Gastrocnemius medialis (tissue), 4 donors: ENCODE measurements at regions of chr9 and their contacts with region 1.

Region 1: DNA sequence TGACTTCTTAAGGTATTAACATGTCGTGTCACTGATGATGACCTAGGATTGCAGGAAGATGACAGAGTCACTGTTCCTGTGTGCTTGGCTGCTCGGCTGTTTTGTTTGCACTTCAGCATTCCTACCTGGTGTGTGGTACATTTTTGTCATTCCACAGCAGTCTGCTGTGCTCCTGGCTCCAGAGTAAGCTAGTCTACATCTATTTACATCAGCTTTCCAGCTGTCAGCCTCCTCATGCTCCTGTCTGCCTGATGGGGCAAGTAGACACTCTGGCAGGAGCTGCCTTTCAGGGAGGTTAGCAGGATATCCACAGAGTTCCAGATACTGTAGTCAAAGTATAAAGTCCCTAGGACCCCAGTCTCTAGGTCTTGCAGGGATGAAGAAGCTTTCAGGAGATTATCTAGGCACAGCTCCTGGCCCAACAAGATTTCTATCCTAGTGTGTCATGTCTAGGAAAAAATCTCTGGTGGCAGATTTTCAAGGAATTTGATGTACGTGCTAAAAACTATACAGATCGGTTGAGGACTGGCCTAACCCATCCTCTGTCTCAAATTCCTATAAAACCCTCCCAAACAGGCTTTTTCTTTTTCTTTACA is 28.4 kb downstream of the RUSC2 start:
- DNase-seq: peak; percentile 28 to 69
- ATAC-seq: peak; percentile 12 to 26
- H3K4me3 ChIP-seq: no peak overlapping the region
- H3K27ac ChIP-seq: peak overlapping the region; percentile 86 to 95 (median 89)
- H3K4me1 ChIP-seq: peaks cover 94 to 96% of the 10 kb centered on the region in 2 donors
- H3K27me3 ChIP-seq: no peaks in the 10 kb centered on the region
- CTCF ChIP-seq: no peak
- POLR2A ChIP-seq: peak; percentile 4 to 39

Region 2: GRCh38 chr9:35489313-35490154 is 28.8 kb before region 1 on chr9 and contains the start of gene RUSC2:
- in situ Hi-C with region 1: no loop called
- intact Hi-C with region 1: loop called (anchors 1 kb)
- DNase-seq: peak; percentile 72 to 88
- ATAC-seq: peak; percentile 56 to 71
- H3K4me3 ChIP-seq: peak within 1 kb of the TSS; percentile 79 to 89 (median 88)
- H3K27ac ChIP-seq: peak within 1 kb of the TSS; percentile 91 to 97 (median 96)
- H3K4me1 ChIP-seq: peaks cover 31% of the 10 kb centered on the region in 2 donors
- H3K27me3 ChIP-seq: no peaks in the 10 kb centered on the region
- CTCF ChIP-seq: peak; percentile 52 to 83 (median 61)
- POLR2A ChIP-seq: peak; percentile 86 to 88
- total RNA-seq, gene RUSC2: 20.8 to 166 (median 45.7) TPM

Region 3: DNA sequence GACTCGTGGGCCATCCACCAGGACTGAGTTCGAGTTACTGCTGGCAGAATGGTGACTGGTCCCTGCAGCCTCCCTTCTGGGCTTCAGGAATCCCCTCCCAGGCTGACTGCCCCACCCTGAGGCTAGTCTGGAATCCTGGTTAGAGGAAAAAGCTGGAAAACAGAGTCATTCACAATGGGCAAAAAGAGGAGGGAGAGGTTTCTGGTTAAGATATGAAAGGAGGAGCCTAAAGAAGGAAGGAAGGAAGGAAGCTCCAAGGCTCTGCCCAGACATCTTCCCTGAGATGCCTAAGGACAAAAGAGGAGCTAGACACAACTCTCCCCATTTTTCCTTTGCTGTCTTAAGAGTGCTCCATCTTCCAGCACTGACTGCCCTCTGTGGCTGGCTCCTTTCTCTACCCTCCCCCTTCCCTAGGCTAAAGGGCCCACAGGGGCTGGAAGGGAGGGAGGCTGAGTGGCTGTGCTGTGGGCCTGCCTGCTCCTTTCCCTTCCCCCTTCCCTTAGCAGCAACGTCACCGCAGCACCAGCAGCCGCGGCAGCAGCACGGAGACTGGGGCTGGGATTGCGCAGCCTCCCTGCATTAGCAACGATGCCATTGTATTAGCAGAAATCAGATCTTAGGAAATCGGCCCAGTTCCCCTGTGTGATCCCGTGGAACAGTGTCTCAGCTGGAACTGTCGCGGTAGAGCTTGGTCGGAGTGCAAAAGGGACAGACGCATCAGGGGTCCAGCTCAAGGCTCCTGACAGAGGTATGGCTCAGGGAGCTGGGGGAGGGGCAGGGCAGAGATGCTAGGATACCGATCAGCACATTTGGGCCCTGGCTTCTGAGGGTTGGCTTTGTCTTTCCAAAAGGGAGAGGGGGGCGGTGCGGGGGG is 20.3 kb after region 1 on chr9:
- in situ Hi-C with region 1: no loop called
- intact Hi-C with region 1: loop called (anchors 2 kb)
- DNase-seq: peak in 1 of 2 donors; percentile 57
- ATAC-seq: peak; percentile 47 to 65
- H3K4me3 ChIP-seq: peak overlapping the region; percentile 14 to 46 (median 39)
- H3K27ac ChIP-seq: peak overlapping the region; percentile 79 to 85 (median 81)
- H3K4me1 ChIP-seq: peaks cover 73 to 83% of the 10 kb centered on the region in 2 donors
- H3K27me3 ChIP-seq: no peaks in the 10 kb centered on the region
- CTCF ChIP-seq: no peak
- POLR2A ChIP-seq: peak in 1 of 2 donors; percentile 27

Region 4: GRCh38 chr9:35563791-35564197 is 45.5 kb after region 1 on chr9:
- in situ Hi-C with region 1: no loop called
- intact Hi-C with region 1: loop called (anchors 1 kb)
- DNase-seq: peak; percentile 55 to 81
- ATAC-seq: peak; percentile 31 to 34
- H3K4me3 ChIP-seq: peak overlapping the region; percentile 46 to 59 (median 51)
- H3K27ac ChIP-seq: peak overlapping the region; percentile 83 to 95 (median 90)
- H3K4me1 ChIP-seq: peaks cover 82 to 95% of the 10 kb centered on the region in 2 donors
- H3K27me3 ChIP-seq: no peaks in the 10 kb centered on the region
- CTCF ChIP-seq: no peak
- POLR2A ChIP-seq: peak; percentile 48 to 73